HEK293 (cell line): ENCODE measurements at regions of chr9 and their contacts with region 1.

Region 1: GRCh38 chr9:73183917-73184861 is 32.5 kb downstream of the ANXA1 start:
- H3K4me3 ChIP-seq: no peak overlapping the region
- H3K27ac ChIP-seq: no peak overlapping the region
- H3K4me1 ChIP-seq: no peaks in the 10 kb centered on the region
- CTCF ChIP-seq: no peak

Region 2: DNA sequence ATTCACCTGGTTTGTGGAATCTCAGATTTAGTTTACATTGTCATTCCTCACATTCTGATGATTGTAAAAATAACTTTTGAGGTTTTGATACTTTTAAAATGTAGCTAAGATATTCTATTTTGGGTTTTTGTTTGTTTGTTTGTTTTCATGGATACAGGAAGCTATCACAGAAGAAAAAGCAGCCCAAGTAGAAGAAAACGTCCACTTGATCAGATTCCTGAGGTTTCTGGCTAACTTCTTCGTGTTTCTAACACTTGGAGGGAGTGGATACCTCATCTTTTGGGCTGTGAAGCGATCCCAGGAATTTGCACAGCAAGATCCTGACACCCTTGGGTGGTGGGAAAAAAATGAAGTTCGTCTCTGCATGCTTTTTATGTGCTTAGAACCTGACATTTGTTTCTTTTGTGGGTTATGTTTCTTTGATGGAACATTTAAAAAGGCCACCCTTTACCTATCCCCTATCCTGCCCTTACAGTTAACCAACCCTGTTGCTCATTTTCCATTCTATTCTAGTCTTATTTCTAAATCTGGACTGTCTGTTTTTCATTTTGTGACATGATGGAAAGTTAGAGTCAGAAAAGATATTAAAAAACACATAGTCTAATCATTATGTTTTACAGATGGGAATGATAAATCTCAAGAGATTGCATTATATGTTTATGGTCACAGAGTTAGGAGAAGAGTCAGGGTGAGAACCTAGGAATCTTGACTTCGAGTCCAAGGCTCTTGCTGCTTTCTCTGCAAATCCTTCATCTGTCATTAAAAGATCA is 395.0 kb before region 1 on chr9:
- CTCF ChIA-PET with region 1: no interaction called
- POLR2A ChIA-PET with region 1: no interaction called
- H3K4me3 ChIP-seq: no peak overlapping the region
- H3K27ac ChIP-seq: no peak overlapping the region
- H3K4me1 ChIP-seq: no peaks in the 10 kb centered on the region
- CTCF ChIP-seq: no peak

Region 3: DNA sequence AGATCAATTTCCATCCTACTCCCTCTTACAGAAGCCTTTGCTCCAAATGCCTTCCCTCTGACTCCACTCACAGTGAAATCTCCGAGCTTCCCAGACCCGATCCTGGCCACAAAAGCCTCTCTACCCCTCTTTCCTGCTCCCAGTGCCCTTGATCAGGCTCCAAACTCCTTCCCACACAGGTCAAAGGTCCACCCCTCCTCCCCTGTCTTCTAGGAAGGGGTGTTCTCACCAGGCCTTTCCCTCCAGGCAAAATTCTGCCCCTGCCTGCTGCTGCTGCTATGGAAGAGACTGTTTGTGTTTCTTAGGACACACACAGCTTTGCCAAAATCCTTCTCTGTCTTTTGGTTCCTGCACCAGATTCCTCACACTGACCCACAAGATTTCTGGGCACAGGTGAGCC is 145.6 kb before region 1 on chr9:
- CTCF ChIA-PET with region 1: interaction called, 10 read pairs
- POLR2A ChIA-PET with region 1: no interaction called
- H3K4me3 ChIP-seq: no peak overlapping the region
- H3K27ac ChIP-seq: no peak overlapping the region
- H3K4me1 ChIP-seq: 0 out of 2 replicates have a peak, but pooled peaks cover 2% of the 10 kb centered on the region
- CTCF ChIP-seq: no peak

Region 4: GRCh38 chr9:73118898-73119554 is 65.2 kb before region 1 on chr9:
- CTCF ChIA-PET with region 1: interaction called, 171 read pairs
- POLR2A ChIA-PET with region 1: no interaction called
- H3K4me3 ChIP-seq: no peak overlapping the region
- H3K27ac ChIP-seq: no peak overlapping the region
- H3K4me1 ChIP-seq: no peaks in the 10 kb centered on the region
- CTCF ChIP-seq: no peak

Region 5: GRCh38 chr9:73210886-73211666 is 26.9 kb after region 1 on chr9:
- CTCF ChIA-PET with region 1: no interaction called
- POLR2A ChIA-PET with region 1: no interaction called
- H3K4me3 ChIP-seq: no peak overlapping the region
- H3K27ac ChIP-seq: no peak overlapping the region
- H3K4me1 ChIP-seq: no peaks in the 10 kb centered on the region
- CTCF ChIP-seq: no peak